ENCODE measurements at regions of chr7 and their contacts with region 1.

Region 1: DNA sequence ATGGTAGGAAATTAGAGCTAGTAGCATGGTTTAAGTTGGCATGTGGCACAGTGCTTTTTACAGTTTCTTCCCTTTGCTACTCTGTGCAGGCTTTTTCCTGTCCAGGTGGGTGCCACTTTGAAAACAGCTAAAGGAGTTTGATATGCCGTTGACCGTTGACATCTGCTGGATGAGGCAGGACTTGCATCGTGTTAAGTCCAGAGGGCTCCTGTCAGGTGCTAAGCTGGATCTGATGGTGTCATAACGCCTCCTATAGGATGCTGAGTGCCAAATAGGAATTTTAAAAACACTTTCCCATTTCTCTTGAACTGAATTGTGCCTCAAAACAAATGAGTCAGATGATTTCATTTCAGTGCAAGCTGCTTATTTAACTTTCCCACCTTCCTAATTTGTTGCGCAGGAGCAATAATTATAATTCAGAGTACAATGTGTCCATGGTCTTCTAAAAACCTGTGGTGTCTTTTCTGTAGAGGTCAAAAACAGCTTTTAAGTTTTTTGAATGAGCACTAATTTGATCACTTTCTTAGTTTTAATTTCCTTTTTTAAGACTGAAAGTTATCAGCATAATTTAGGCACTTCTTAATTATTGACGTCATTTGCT is 178.3 kb downstream of the CDCA7L start:
- DNase-seq: peak; percentile 37 to 74 (median 52)
- ATAC-seq: peak; percentile 98
- H3K4me3 ChIP-seq: no peak overlapping the region
- H3K27ac ChIP-seq: no peak overlapping the region
- H3K4me1 ChIP-seq: peaks cover 0 to 3% of the 10 kb centered on the region in 2 experiments; a peak in 1 of 5 replicates
- H3K27me3 ChIP-seq: peaks cover 0 to 2% of the 10 kb centered on the region in 2 experiments; a peak in 1 of 5 replicates
- CTCF ChIP-seq: peak; percentile 78 to 96 (median 95)
- EP300 ChIP-seq: no peak
- POLR2A ChIP-seq: no peak
- RAD21 ChIP-seq: peak; percentile 61 to 78

Region 2: GRCh38 chr7:21253740-21254687 is 513.4 kb before region 1 on chr7:
- CTCF ChIA-PET with region 1: interaction called, 13 read pairs
- POLR2A ChIA-PET with region 1: no interaction called
- in situ Hi-C with region 1: loop called (anchors 5 kb)
- intact Hi-C with region 1: loop called (anchors 1 kb)
- DNase-seq: peak; percentile 10 to 66 (median 24)
- ATAC-seq: peak; percentile 96
- H3K4me3 ChIP-seq: no peak overlapping the region
- H3K27ac ChIP-seq: no peak overlapping the region
- H3K4me1 ChIP-seq: no peaks in the 10 kb centered on the region
- H3K27me3 ChIP-seq: peaks cover 0 to 2% of the 10 kb centered on the region in 2 experiments; a peak in 2 of 5 replicates
- CTCF ChIP-seq: peak; percentile 60 to 66 (median 62)
- EP300 ChIP-seq: no peak
- POLR2A ChIP-seq: no peak
- RAD21 ChIP-seq: peak; percentile 61 to 65